KBM-7 (cell line): ENCODE measurements at regions of chr12 and their contacts with region 1.

Region 1: DNA sequence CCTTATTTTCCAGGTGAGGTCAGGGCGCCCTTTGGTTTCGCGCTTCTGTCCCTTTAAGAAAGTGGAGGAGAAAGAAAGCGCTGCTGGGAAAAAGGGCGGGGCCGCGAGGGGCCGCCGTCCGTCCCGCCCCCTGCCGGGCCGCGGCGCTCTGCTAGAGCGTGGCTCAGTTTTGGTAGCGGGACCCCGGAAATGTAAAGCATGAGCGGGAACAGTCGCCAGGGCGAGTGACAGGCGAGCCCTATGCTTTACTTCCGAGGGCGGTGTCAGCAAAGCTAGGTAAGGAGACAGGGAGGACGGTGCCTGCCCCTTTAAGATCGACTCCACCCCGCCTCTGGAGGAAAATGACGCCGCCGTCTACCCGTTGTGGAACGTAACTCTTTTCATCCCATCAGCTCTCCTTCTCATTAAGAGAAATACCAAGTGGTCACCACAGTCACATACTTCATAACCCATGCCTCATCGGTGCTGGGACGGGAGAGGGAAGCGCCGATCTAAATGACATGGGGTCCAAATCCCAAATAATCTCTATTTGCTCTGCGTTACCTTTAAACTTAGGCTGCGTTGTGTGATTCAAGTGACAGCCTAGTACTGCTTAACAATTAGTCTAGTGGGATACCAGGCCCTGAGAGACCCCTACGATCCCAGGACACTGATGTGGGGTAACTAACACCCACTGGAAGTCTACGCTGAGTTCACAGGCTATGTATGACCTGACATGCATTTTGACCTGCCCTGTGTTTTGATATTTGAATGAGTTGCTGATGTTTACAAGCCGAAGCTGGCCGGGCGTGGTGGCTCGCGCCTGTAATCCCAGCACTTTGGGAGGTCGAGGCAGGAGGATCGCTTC is at the start of gene ETFBKMT:
- DNase-seq: peak; percentile 88

Region 2: GRCh38 chr12:31603546-31604009 is 55.7 kb before region 1 on chr12:
- in situ Hi-C with region 1: no loop called
- DNase-seq: no peak

Region 3: DNA sequence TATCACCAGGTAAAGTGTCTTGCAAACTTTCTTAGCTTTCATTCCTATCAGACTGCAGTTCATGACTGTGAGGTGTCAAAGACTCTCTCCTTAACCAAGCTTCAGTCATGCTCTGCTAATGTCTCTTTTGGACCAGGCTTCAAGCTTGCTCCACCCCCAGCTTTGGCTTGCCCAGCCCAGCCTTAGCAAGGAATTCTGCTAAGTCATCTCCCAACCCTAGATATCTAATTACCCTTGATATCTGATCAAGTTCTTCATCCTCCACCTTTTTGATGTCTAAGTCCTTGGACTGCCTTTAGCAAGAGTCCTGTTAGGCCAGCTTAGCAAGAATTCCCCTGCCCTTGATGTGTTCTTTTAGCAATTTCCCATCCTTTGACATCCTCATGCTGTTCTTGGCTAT is 631.1 kb after region 1 on chr12:
- in situ Hi-C with region 1: loop called (anchors 25 kb)
- DNase-seq: no peak